ENCODE measurements at regions of chr3 and their contacts with region 1.

Region 1: GRCh38 chr3:53045518-53046170 is at the start of gene SFMBT1:
- DNase-seq: no peak
- total RNA-seq, gene SFMBT1: 14.7 TPM

Region 2: DNA sequence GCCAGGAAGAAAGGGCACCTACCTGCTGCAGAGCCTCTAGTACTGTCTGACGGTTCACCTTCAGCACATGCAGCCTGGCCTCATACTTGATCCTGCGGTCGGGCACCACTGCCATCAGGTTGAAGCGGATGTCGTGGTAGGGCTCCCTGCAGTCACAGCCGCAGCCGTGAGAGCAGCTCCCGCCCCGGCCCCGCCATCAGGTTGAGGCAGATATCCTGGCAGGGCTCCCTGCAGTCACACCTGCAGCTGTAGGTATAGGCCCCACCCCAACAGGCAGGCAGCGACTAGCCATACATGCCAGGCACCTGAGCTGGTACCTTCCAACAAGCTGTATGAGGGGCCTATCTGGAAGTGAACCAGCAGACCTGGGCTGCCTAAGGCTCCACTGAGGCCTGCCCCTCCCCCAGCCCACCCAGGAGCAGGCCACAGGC is 639.4 kb before region 1 on chr3:
- intact Hi-C with region 1: loop called (anchors 10 kb)
- DNase-seq: peak; percentile 67

Region 3: DNA sequence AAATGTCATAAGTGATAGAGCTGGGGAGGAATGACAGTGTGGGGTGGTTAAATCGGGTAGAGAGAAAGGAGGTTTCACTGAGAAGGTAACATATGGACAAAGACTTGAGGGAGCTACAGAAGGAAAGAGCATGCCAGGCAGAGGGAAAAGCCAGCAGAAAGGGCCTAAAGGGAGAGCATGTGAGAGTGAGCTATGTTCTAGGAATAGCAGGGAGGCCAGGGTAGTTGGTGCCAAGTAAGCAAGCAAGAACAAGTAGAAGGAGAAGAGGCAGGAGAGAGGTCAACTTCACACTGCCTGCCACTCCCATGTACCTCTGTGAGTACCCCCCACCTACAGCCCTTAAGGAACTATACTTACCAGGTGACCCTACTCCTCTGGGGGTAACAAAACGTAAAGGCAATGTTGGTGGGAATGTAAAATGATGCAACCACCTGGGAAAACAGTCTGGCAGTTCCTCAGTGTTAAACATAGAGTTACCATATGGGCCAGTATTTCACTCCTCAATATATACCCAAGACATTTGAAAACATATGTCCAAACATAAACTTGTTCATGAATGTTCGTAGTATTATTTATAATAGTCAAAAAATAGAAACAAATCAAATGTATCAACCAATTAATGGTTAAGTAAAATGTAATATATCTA is 67.4 kb before region 1 on chr3:
- intact Hi-C with region 1: loop called (anchors 5 kb)
- DNase-seq: no peak

Region 4: GRCh38 chr3:52990637-52991036 is 55.0 kb before region 1 on chr3:
- intact Hi-C with region 1: no loop called
- DNase-seq: no peak

Region 5: GRCh38 chr3:53677413-53677812 is 631.8 kb after region 1 on chr3:
- intact Hi-C with region 1: no loop called
- DNase-seq: no peak